ENCODE measurements at regions of chr6 and their contacts with region 1.

Region 1: DNA sequence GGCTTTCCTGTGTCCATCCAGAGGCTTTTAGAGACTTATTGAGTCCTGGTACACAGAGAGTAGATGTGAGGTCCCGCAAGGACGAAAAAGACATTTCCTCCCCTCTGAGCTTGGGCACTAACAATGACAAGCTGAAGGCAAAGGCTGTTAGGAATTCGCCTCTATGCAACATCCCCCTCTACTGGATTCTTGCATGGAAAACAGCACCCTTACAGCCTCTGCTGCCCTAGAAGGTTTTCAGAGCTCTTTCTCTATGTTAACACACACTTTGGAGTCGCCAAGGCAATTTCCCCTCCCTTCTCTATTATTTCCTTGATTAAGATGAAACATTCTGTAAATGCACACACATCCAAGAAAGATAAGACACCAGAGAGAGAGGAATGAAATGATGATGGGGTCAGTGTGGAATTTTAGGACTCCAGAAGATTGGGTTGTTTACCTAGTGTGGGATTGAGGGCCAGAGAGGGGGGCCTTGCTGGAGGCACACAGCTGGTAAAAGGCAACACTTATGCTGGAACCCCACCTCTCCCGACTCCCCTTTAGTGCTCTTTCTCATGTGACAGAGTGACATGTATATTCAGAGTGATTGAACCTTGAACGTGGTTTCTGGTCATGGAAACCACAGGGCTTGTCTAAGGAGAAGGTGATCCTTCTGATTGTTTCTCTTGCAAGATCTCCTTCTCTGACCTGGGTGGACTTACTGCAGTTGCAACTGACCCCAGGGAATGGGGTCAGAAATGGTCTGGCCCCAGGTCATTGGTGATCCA is 300.7 kb downstream of the CLIC5 start:
- DNase-seq: peak; percentile 69
- H3K4me3 ChIP-seq: no peak overlapping the region
- H3K27ac ChIP-seq: peak overlapping the region; percentile 21
- H3K27me3 ChIP-seq: no peaks in the 10 kb centered on the region
- CTCF ChIP-seq: peak; percentile 92

Region 2: DNA sequence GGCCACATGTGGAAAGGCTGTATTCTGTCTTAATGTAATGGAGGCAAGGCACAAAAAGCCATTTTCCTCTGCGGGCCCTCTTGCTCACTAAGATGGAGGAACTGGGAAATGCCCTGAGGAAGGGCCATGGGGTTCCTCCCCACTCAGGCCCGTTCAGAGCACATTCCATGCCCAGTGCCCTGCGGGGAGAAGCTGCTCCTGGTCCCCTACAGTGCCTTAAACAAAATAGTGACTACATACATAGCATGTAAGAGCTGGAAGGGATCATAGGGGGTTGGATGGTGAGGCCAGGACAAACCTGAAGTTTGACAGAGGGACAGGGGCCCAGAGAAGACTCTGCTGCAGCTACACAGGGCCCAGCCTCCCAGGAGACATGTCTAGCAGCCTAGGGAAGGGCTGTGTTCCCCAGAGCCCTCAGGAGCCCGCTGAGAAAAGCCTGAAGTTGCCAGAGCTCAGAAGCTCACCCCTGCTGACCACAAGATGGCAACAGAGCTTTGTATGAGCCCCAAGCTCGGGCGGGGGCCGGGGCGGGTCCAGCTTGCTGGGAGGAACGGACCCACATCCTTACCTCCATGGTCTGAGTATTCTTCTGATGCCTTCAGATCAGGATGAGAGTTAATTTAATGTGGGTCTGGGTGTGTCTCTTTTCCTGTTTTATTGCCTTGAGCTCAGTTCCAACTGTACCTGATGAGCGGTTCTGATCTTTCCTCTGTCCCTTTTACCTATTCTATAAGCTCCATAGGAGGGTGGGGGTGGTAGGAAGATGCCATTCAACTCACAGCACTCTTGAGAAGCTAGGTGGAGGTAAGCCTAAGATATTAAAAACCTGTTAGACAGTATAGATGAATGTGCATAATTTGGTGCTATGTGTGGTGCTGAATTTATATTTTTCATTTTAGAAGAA is 1084.5 kb before region 1 on chr6:
- CTCF ChIA-PET with region 1: interaction called, 19 read pairs
- POLR2A ChIA-PET with region 1: no interaction called
- DNase-seq: peak; percentile 23
- H3K4me3 ChIP-seq: no peak overlapping the region
- H3K27ac ChIP-seq: no peak overlapping the region
- H3K27me3 ChIP-seq: peaks cover 20% of the 10 kb centered on the region
- CTCF ChIP-seq: peak; percentile 71

Region 3: DNA sequence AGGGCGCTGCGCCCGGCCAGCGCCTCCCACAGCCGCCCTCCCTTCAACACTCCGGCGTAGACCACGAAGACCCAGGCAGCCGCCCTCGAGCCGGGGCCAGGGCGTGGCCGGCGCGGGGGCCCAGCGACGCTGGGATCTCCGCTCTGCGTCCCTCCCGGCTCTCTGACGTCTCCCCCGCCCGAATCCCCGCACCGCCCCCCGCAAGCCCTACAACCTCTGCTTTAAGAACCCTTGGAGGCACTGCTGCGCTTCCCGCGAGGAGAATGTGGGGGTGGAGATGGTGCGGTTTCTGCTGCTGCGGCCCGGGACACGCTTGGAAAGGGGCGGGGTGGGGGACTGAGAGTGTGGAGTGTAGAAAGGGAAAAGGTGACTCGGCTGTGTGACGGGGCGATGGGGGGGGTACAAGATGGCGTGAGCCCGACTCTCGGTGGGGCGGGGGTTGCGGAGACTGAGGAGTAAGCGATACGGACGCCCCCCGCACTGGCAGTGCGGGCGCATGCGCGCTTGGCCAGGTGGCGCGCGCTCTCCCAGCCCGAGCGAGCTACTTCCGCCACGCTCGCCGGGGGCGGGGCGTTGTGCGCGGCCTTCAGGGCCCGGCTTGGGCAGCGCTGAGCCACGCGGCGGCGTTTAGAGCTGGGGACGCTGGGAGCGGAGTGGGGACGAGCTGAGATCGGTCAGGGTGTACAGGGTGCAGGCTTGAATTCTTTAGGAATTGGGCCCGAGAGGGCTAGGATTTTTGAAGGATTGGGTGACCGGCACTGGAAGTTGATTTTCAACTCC is 337.2 kb before region 1 on chr6 and contains the start of gene SUPT3H:
- CTCF ChIA-PET with region 1: interaction called, 10 read pairs
- POLR2A ChIA-PET with region 1: interaction called, 4 read pairs
- DNase-seq: peak; percentile 75
- H3K4me3 ChIP-seq: peak within 1 kb of the TSS; percentile 78
- H3K27ac ChIP-seq: peak within 1 kb of the TSS; percentile 95
- H3K27me3 ChIP-seq: no peaks in the 10 kb centered on the region
- CTCF ChIP-seq: peak; percentile 29; the same call in 1 of the 2 replicates
- polyA plus RNA-seq, gene SUPT3H: 6.0 and 8.7 TPM in 2 replicates

Region 4: GRCh38 chr6:45436544-45437438 is 278.1 kb before region 1 on chr6:
- CTCF ChIA-PET with region 1: interaction called, 10 read pairs
- POLR2A ChIA-PET with region 1: no interaction called
- DNase-seq: no peak
- H3K4me3 ChIP-seq: no peak overlapping the region
- H3K27ac ChIP-seq: no peak overlapping the region
- H3K27me3 ChIP-seq: no peaks in the 10 kb centered on the region
- CTCF ChIP-seq: no peak

Region 5: GRCh38 chr6:45697605-45698004 is 17.3 kb before region 1 on chr6:
- CTCF ChIA-PET with region 1: interaction called, 46 read pairs
- POLR2A ChIA-PET with region 1: no interaction called
- DNase-seq: peak; percentile 91
- H3K4me3 ChIP-seq: no peak overlapping the region
- H3K27ac ChIP-seq: peak overlapping the region; percentile 76
- H3K27me3 ChIP-seq: no peaks in the 10 kb centered on the region
- CTCF ChIP-seq: no peak

Region 6: DNA sequence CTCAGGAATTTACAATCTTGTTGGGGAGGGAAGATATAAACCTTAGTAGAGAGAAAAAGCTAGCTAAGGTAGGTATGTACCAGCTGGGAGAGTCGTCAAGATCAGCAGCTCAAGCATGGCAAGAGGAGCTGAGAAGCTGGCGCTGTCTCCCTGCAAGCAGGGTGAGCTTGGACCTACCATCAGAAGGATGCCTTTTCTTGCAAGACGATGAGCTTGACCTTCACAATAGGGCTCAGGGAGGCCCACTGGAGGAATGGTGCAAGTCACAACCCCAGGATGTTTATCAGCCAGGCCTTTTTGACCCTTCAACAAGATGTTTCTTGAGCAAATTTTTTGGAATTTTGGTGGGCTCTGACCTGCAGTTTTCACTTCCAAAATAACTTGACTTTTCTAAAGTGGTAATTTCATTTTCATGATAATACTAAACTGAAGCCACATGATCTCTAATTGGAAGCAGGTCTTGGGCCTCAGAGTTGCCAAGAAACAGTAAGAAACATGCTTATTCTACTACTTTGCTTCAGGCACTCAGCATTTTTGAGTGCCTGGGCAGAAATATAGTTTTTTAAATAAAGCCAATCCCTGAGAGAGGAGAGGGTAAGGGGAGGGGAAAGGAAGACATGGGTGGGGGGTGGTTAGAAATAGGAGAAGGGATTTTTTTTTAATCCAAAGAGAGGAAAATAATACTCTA is 42.7 kb after region 1 on chr6:
- CTCF ChIA-PET with region 1: no interaction called
- POLR2A ChIA-PET with region 1: no interaction called
- DNase-seq: no peak
- H3K4me3 ChIP-seq: no peak overlapping the region
- H3K27ac ChIP-seq: no peak overlapping the region
- H3K27me3 ChIP-seq: peaks cover 6% of the 10 kb centered on the region
- CTCF ChIP-seq: no peak

Region 7: DNA sequence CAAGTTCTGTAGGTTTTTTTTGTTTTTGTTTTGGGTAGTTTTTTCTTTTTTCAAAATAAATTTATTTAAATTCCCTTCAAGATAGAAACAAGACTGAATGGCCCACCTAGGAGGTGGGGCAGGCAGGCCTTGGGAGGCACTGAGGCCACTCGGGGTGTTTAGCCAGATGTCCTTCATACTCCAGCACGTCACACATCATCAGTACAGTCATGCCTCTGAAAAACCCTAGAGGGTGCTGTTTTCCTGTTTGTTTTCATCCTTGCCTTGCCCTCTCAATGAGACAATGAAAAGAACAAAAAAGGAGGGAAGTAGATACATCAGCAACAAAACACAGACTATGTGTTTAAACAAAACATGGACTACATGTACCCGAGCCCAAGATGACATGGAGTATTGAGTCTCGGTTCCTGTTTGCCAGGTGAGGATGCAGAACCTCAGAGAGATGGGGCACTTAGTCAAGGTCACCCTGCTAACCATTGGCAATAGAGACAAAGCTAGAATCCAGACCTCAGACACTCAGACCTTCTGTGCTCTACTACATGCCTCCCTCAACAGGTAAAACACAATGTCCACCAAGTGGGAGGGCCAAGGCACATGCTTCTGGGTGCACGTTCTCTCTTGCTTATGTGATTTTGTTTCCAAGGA is 327.6 kb after region 1 on chr6:
- CTCF ChIA-PET with region 1: no interaction called
- POLR2A ChIA-PET with region 1: no interaction called
- DNase-seq: no peak
- H3K4me3 ChIP-seq: no peak overlapping the region
- H3K27ac ChIP-seq: no peak overlapping the region
- H3K27me3 ChIP-seq: no peaks in the 10 kb centered on the region
- CTCF ChIP-seq: peak; percentile 32

Measured in AG04450 (cell line).